PC-9 (cell line): ENCODE measurements at regions of chr5 and their contacts with region 1.

Region 1: DNA sequence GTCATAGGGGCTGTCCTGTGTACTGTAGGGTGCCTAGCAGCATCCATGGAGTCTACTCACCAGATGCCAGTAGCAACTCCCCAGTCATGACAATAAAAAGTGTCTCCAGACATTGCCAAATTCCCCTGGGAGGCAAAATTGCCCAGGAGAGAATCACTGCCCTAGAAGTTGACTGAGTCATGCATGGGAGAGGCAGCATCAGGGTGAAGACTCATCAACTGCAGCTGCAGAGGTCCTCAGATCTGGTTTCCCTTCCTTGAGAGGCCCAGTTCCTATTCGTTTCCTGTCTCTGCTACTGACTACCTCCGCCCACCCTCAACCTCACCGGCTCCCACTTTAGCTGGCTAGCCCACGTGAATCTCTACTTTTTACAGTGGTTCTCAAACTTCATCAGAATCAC is 88.6 kb upstream of the AGXT2 start:
- DNase-seq: no peak
- H3K4me3 ChIP-seq: no peak overlapping the region
- H3K27ac ChIP-seq: no peak overlapping the region
- H3K4me1 ChIP-seq: no peaks in the 10 kb centered on the region
- H3K27me3 ChIP-seq: peaks cover 65% of the 10 kb centered on the region
- CTCF ChIP-seq: no peak

Region 2: GRCh38 chr5:35182541-35183535 is 46.5 kb after region 1 on chr5:
- CTCF ChIA-PET with region 1: no interaction called
- POLR2A ChIA-PET with region 1: interaction called, 20 read pairs
- intact Hi-C with region 1: no loop called
- DNase-seq: peak in 1 of 2 experiments; percentile 21
- H3K4me3 ChIP-seq: no peak overlapping the region
- H3K27ac ChIP-seq: no peak overlapping the region
- H3K4me1 ChIP-seq: no peaks in the 10 kb centered on the region
- H3K27me3 ChIP-seq: peaks cover 72% of the 10 kb centered on the region
- CTCF ChIP-seq: peak; percentile 53

Region 3: GRCh38 chr5:35281613-35282012 is 145.2 kb after region 1 on chr5:
- CTCF ChIA-PET with region 1: no interaction called
- POLR2A ChIA-PET with region 1: no interaction called
- intact Hi-C with region 1: no loop called
- DNase-seq: peak in 1 of 2 experiments; percentile 31
- H3K4me3 ChIP-seq: no peak overlapping the region
- H3K27ac ChIP-seq: no peak overlapping the region
- H3K4me1 ChIP-seq: no peaks in the 10 kb centered on the region
- H3K27me3 ChIP-seq: no peaks in the 10 kb centered on the region
- CTCF ChIP-seq: no peak